Calu3 (cell line): ENCODE measurements at regions of chr3 and their contacts with region 1.

Region 1: DNA sequence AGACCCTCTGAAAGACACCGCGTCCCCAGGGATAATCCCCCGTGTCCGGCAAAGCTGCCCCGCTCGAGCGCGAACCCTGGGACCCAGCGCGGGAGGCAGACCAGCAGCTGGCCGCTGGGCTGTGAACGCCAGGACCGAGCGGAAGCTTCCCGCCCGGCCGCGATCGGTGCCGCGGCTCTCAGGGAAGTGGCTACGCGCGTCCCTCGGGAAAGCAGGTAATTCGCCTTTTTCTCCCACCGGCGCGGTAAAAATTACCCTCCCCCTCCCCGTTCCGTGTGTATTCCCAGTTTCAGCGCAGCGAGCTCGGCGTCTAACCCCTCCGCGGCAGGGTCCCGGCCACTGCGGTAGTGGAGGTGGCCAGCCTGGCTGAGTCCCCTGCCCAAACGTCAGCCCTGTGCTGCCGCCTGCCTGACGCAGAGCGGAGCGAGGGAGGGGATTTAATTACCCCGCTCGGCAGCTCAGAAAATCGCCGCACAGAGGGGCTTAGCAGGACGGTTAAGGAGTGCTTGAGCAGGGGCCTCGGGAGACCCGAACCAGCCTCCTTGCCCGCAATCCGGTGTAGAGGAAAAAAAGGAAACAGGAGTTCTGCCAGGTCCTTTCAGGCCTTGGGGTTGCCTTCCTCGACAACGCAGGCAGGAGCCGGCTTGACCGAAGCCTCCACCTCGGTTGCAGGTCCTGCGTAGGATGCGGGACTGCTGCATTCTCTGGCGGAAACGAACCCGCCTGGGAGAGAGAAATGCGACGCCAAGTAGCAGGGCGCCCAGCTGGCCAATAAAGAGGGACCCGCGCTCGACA is 2.9 kb downstream of the GATA2 start:
- DNase-seq: peak; percentile 71
- H3K4me3 Mint-ChIP-seq: peak overlapping the region; percentile 96
- H3K27ac Mint-ChIP-seq: peak overlapping the region; percentile 74
- H3K4me1 Mint-ChIP-seq: no peaks in the 10 kb centered on the region
- H3K27me3 Mint-ChIP-seq: peaks cover 9% of the 10 kb centered on the region
- CTCF ChIP-seq: no peak

Region 2: GRCh38 chr3:128426128-128426921 is 63.7 kb before region 1 on chr3:
- CTCF ChIA-PET with region 1: interaction called, 14 read pairs
- intact Hi-C with region 1: no loop called
- DNase-seq: peak; percentile 88
- H3K4me3 Mint-ChIP-seq: peak overlapping the region; percentile 22
- H3K27ac Mint-ChIP-seq: no peak overlapping the region
- H3K4me1 Mint-ChIP-seq: peaks cover 16% of the 10 kb centered on the region
- H3K27me3 Mint-ChIP-seq: peaks cover 33% of the 10 kb centered on the region
- CTCF ChIP-seq: peak; percentile 98

Region 3: DNA sequence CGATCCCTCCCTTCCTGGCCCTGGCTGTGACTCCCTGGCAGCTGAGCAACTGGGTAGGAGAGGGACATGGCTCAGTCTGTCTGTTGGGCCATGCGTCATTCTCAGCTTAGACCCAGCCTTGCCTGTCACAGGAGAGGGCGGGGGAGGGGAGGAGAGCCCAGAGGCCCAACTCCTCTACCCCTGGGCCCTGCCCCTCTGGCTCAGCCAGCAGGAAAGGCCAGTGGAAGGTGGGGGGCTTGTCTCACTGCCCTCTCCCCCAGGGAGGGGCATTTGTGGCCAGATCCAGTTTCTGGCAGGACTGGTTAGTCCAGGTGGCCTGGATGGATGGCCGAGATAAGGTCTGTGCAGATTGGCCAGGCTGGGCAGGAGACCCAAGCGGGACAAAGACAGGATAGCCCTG is 55.0 kb before region 1 on chr3:
- CTCF ChIA-PET with region 1: interaction called, 7 read pairs
- intact Hi-C with region 1: loop called (anchors 2 kb)
- DNase-seq: peak; percentile 96
- H3K4me3 Mint-ChIP-seq: no peak overlapping the region
- H3K27ac Mint-ChIP-seq: no peak overlapping the region
- H3K4me1 Mint-ChIP-seq: peaks cover 27% of the 10 kb centered on the region
- H3K27me3 Mint-ChIP-seq: peaks cover 45% of the 10 kb centered on the region
- CTCF ChIP-seq: no peak